ENCODE measurements at regions of chr1 and their contacts with region 1.

Region 1: GRCh38 chr1:202018468-202019255 is 8.3 kb downstream of the ELF3 start:
- DNase-seq: peak; percentile 94
- H3K4me3 Mint-ChIP-seq: peak overlapping the region; percentile 37
- H3K27ac Mint-ChIP-seq: peak overlapping the region; percentile 39
- H3K4me1 Mint-ChIP-seq: peaks cover 41% of the 10 kb centered on the region
- H3K27me3 Mint-ChIP-seq: peaks cover 13% of the 10 kb centered on the region
- CTCF ChIP-seq: no peak

Region 2: DNA sequence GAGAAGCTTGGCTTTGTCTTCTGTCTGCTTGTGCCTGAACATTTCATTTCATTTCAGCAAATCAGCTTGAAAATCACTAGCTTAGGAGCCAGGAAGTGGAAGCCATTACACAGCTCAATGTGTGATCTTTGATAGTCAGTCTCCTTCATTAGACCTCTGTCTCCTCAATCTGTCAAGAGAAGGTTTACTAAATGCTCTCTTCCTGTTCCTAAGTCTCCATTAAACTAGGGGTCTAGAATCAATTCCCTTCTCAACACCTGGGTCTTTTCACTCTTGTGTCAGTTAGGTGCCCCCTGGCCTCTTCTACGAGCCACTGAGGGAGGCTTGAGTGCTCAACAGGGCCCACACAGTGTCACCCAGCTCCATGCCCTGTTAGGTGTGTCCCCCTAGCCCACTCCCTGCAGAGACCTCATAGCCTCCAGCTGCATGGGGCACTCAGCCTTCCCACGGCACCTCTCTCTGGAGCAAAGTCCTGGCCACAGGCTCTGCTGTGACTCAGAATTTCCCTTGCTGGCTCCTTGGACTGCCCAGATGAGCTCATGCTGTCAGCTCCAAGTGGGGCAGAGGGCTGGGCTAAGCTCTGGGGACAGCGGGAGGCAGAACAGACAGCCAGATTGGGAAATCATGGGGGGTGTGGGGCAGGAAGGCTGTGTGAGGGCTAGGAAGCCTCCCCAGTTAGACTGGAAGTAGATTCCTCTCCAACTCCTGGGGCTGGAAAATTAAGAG is 305.4 kb before region 1 on chr1:
- CTCF ChIA-PET with region 1: no interaction called
- POLR2A ChIA-PET with region 1: no interaction called
- intact Hi-C with region 1: no loop called
- DNase-seq: peak; percentile 100
- H3K4me3 Mint-ChIP-seq: peak overlapping the region; percentile 59
- H3K27ac Mint-ChIP-seq: peak overlapping the region; percentile 98
- H3K4me1 Mint-ChIP-seq: peaks cover 54% of the 10 kb centered on the region
- H3K27me3 Mint-ChIP-seq: no peaks in the 10 kb centered on the region
- CTCF ChIP-seq: no peak

Region 3: DNA sequence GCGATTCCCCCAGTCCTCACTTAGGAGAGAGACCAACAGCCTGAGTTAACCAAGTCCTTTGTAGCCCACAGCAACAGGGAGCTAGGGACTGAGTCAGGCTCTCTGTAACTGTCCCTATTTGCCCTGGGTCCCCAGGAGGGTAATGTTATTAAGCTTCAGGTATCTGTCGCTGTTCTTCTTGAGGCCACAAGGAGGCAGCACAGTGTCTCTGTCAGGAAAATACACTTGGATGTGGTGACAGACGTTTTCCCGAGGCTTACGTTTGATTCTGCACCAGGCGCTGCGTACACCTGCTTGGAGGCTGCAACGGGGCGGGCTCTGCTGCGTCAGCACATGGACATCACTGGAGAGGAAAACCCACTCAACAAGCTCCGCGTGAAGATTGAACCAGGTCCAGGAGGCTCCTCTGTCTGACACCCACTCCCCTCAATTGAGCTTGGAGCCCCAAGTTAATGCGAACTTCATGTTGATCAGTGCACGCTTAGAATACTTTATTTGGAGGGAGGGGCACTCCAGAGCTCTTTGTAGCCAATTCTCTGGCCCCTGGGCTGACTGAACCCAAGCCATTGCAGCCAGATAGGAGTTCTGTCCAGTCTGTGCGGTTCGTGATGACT is 18.9 kb before region 1 on chr1:
- CTCF ChIA-PET with region 1: interaction called, 158 read pairs
- POLR2A ChIA-PET with region 1: interaction called, 5 read pairs
- intact Hi-C with region 1: no loop called
- DNase-seq: peak; percentile 81
- H3K4me3 Mint-ChIP-seq: no peak overlapping the region
- H3K27ac Mint-ChIP-seq: no peak overlapping the region
- H3K4me1 Mint-ChIP-seq: no peaks in the 10 kb centered on the region
- H3K27me3 Mint-ChIP-seq: no peaks in the 10 kb centered on the region
- CTCF ChIP-seq: peak; percentile 78

Region 4: GRCh38 chr1:202029171-202029665 is 10.6 kb after region 1 on chr1:
- CTCF ChIA-PET with region 1: interaction called, 65 read pairs
- POLR2A ChIA-PET with region 1: interaction called, 45 read pairs
- intact Hi-C with region 1: no loop called
- DNase-seq: peak; percentile 94
- H3K4me3 Mint-ChIP-seq: no peak overlapping the region
- H3K27ac Mint-ChIP-seq: peak overlapping the region; percentile 89
- H3K4me1 Mint-ChIP-seq: peaks cover 28% of the 10 kb centered on the region
- H3K27me3 Mint-ChIP-seq: peaks cover 30% of the 10 kb centered on the region
- CTCF ChIP-seq: no peak

Region 5: DNA sequence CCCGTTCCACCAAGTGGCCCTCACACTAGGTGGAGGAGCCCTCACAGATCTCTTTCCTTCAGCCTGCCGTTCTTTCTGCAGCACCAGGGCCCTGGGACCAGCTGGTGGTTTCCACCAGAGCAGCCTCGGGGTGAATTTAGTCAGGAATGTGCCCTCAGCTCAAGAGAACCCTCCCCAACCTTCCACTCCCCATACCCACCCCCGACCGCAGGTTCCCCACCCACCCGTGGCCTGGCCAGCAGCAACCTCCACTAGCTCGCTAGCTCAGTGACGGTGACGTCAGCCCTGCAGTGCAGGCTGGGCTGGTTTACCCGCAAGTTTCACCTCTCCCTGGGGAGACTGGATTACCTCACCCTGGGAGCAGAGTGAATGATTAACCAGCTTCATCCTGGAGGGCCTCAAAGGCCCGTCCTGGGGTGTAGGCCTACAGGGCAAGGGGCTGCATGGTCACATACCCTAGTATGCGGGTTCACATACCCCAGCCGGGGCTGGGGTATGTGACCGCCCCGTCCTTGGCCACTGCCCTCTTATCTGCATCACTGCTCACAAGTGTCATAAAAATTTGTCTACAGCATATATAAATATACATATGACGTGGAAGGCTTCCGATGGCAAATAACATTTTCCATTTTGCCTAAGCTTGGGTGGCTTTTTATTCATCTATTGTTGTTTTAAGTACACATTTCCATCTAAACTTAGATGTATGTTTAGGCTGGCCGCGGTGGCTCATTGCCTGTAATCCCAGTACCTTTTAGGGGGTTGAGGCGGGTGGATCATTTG is 16.2 kb after region 1 on chr1:
- CTCF ChIA-PET with region 1: interaction called, 4 read pairs
- POLR2A ChIA-PET with region 1: interaction called, 45 read pairs
- intact Hi-C with region 1: no loop called
- DNase-seq: peak; percentile 97
- H3K4me3 Mint-ChIP-seq: peak overlapping the region; percentile 30
- H3K27ac Mint-ChIP-seq: peak overlapping the region; percentile 58
- H3K4me1 Mint-ChIP-seq: peaks cover 29% of the 10 kb centered on the region
- H3K27me3 Mint-ChIP-seq: peaks cover 6% of the 10 kb centered on the region
- CTCF ChIP-seq: no peak

Region 6: DNA sequence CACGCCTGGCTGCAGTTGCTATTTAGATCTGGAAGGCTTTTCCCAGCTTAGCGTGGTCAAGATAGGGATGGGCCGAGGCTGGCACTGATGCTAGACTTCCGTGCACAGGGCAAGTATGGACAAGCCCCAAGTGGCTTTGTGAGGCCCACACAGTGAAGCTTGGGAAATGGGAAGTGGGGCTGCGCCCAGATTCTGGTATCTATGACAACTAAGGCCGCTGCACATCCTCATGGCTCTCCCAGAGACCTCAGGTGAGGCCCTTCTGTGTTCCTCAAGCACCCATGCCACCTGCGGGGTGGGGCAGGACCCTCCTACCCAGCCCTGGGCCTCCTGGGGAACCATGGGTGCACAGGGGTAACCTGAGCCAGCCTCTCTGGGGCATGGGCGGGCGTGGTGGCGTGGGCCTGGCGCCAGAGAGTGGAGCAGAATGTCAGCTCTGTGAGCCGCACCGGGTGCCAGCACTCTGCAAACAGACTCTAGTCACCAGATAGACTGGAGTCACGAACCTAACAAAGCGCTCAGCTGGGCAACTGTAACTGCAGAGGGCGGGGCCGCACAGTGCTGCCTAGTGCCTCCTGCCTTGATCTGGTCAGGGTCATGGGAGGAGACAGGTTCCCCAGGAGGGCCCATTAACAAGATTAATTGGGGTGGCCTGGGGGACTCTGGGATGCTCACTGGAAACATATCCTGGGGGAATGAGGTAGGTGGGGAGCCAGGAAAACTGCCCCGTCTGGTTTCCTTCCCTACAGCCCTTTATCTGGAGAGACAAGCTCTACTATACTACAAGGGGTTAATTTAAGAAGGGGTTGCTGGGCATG is 38.2 kb after region 1 on chr1:
- CTCF ChIA-PET with region 1: interaction called, 6 read pairs
- POLR2A ChIA-PET with region 1: interaction called, 42 read pairs
- intact Hi-C with region 1: loop called (anchors 5 kb)
- DNase-seq: peak; percentile 100
- H3K4me3 Mint-ChIP-seq: peak overlapping the region; percentile 28
- H3K27ac Mint-ChIP-seq: peak overlapping the region; percentile 97
- H3K4me1 Mint-ChIP-seq: peaks cover 33% of the 10 kb centered on the region
- H3K27me3 Mint-ChIP-seq: no peaks in the 10 kb centered on the region
- CTCF ChIP-seq: no peak

Region 7: DNA sequence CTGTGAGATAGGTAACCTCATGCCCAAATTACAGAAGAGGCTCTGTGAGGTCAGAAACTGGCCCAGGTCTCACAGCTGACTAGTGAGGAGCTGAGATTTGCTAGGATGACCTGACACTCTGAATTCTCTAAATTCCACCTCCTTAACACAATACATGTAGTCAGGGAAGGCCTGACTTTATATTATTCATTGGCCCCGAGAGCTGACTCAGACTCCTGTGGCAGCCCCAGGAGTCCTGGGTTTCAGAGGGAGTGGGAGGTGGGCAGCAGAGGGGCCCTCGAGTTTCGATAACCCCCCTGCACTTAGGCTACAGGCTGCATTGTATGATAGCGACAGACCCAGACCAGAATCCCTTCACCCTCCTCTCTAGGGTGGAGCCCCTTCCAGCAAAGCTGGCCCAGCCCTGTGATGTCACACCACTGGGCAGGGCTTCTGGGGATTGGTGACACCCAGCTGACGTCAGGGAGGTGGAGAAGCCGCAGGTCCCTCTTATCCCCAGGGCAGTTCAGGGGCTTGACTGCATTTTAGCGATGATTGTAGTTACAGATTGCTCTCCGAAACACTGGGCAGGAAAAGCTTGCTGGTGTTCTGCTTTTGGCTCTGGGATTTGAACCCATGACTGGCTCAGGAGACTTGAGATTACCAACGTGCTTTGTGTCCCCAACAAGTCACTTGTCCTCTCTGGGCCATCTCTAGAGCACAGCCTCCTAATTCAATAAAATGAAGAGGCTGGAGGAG is 87.0 kb after region 1 on chr1:
- CTCF ChIA-PET with region 1: interaction called, 1,380 read pairs
- POLR2A ChIA-PET with region 1: interaction called, 13 read pairs
- intact Hi-C with region 1: no loop called
- DNase-seq: peak; percentile 76
- H3K4me3 Mint-ChIP-seq: no peak overlapping the region
- H3K27ac Mint-ChIP-seq: peak overlapping the region; percentile 2
- H3K4me1 Mint-ChIP-seq: peaks cover 40% of the 10 kb centered on the region
- H3K27me3 Mint-ChIP-seq: no peaks in the 10 kb centered on the region
- CTCF ChIP-seq: no peak

Region 8: DNA sequence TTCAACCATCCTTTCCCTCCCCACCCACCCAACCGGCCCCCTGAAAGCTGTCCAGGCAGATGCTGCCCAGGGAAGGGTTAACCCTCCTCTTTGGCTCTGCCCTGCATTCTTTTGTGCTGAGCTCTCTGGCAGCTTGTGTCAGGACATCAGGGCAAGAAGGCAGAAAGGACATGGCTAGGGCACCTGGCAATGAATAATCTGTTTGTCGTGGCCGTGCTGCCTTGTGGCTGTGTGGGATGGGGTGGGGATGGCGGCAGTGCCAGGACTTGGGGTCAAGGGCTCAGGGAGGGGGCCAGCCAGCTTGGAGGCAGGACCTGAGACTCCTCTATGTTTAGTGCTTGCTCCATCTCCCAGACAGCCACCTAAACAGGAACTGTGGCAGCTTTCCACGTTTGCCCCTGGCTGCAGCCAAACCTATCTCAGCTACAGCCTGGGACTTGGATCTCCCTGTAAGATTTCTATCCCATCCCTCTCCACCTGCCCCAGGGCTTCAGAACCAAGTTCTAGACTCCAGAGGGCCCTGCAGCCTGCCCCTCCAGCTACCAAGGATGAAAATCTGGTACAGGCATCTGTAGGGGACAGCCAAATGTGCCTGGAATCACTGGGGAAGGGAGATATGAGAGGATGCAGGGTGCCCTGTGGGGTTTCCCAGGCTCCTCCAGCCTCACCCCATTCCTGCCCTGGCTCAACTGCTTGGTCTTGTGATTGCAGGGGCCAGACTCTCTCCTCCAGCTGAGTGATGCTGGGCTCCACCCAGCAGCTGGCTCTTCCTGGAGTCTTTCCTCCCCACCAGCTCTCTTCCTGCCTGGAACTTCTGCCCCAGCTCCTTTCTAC is 94.4 kb after region 1 on chr1:
- CTCF ChIA-PET with region 1: interaction called, 1,380 read pairs
- POLR2A ChIA-PET with region 1: interaction called, 15 read pairs
- intact Hi-C with region 1: no loop called
- DNase-seq: peak; percentile 27
- H3K4me3 Mint-ChIP-seq: no peak overlapping the region
- H3K27ac Mint-ChIP-seq: no peak overlapping the region
- H3K4me1 Mint-ChIP-seq: peaks cover 31% of the 10 kb centered on the region
- H3K27me3 Mint-ChIP-seq: no peaks in the 10 kb centered on the region
- CTCF ChIP-seq: no peak

Measured in MCF 10A (cell line).